Lower leg skin (tissue), 4 donors: ENCODE measurements at regions of chr2 and their contacts with region 1.

Region 1: GRCh38 chr2:97669448-97669847 is at the start of gene C2orf92:
- DNase-seq: no peak
- H3K4me3 ChIP-seq: no peak within 1 kb of the TSS
- CTCF ChIP-seq: no peak
- POLR2A ChIP-seq: no peak
- total RNA-seq, gene C2orf92: 5.0 to 20.2 (median 13.4) TPM

Region 2: DNA sequence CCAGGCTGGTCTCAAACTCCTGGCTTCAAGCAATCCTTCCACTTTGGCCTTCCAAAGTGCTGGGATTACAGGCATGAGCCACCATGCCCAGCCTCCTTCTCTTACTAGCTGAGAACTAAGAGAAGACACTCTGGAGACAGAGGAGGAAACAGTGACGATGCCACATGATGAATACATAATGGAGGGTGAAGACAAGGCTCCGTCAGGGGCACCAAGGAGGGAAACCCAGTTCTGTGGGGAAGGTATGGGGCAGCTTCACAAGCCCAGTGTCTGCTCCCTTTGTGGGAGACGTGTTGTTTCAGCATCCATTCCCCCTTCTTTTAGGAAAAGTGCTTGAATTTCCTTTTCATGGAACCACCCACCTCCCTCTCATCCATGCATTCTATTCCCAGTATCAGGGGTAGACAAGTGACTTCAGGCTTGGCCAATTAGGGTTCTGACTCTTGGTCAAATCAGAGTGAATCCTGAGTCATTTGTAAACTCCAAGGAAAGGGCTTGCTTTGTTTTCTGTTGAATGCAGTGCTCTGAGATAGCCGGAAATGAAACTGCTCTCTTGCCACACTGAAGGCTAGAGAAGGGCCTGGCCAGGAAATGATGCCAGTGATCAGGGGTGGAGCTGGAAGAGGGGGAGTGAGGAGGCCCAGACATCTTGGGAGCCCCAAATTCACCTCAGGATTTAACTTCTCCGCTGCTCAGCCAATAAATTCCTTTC is 1427.4 kb before region 1 on chr2:
- intact Hi-C with region 1: loop called (anchors 5 kb)
- DNase-seq: peak; percentile 69 to 91
- H3K4me3 ChIP-seq: no peak overlapping the region
- CTCF ChIP-seq: no peak
- POLR2A ChIP-seq: no peak

Region 3: GRCh38 chr2:97067279-97068004 is 602.0 kb before region 1 on chr2:
- intact Hi-C with region 1: no loop called
- DNase-seq: no peak
- H3K4me3 ChIP-seq: no peak overlapping the region
- CTCF ChIP-seq: no peak
- POLR2A ChIP-seq: no peak